ENCODE measurements at regions of chr2 and their contacts with region 1.

Region 1: DNA sequence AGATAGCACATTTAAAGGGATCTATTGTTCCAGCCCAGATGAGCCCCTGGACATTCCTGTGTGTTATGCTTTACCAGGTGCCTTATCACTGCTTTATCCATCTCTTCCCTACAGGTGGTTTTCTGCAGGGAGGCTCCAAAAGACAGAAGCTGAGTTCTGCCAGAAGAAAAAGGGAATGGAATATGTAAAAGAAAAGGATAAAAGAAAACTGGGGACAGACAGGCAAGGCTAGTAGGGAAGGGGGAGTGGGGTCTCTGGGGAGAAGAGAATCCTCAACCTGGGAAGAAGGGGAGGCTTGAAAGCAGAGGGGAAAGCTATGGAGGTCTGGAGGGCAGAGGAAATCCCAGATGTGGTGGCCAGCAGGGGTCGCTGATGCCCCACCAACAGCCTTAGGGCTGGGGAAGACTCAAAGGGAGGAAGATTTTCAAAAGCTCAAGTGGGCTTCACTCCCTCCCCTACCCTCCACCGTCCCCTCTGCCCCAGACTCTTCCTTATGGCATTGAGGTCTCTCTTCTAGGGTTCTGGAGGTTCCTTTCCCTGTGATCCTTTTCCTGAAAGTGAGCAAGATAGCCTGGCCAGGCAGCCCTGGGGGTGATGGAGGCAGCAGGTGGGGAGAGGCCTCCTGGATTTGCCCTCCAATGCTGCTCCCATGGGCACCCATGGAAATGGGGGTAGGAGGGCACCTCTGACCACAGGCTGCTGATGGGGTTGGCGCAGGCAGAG is 178.1 kb upstream of the PKDCC start:
- DNase-seq: peak; percentile 55
- ATAC-seq: peak; percentile 77
- H3K4me3 ChIP-seq: no peak overlapping the region
- H3K27ac ChIP-seq: no peak overlapping the region
- H3K4me1 ChIP-seq: peaks cover 22% of the 10 kb centered on the region
- H3K27me3 ChIP-seq: no peaks in the 10 kb centered on the region
- CTCF ChIP-seq: peak; percentile 94
- POLR2A ChIP-seq: 0 out of 2 replicates have a peak, but pooled peaks have one; percentile 28
- RAD21 ChIP-seq: peak; percentile 98

Region 2: DNA sequence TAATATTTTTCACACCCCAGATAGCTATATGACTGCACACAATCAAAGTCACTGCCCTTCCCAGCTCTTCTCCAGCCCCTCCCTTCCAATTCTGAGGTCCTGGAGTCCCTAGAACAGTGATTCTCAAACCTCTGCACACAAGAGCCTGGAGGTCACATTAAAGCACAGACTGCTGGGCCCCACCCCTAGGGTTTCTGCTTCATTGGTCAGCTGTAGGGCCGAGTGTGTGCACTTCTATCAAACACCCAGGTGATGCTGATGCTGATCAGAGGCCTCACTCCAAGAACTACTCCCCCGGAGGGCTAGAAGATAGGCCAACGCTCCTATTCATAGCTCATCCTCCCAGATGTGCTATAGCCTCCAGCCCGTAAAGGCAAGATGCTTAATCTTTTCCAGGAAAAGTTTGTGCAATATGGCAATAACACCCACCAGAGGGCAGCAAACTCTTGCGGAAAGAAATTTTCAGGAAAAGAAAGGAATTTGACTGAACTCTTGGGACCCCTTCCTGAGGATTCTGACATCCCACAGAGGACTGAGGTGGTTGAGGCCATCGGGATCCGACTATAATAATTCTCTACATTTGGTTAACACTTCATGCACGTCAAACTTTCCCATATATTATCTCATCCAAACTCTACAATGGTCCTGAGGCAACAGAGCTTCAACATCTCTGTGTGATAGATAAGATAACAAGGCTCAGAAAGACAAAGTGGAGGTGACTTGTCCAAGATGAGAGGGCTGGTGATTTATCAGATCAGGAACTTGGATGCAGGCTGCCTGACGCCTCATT is 16.1 kb before region 1 on chr2:
- CTCF ChIA-PET with region 1: interaction called, 41 read pairs
- POLR2A ChIA-PET with region 1: no interaction called
- dilution Hi-C with region 1: no loop called
- in situ Hi-C with region 1: no loop called
- intact Hi-C with region 1: loop called (anchors 1 kb)
- DNase-seq: peak; percentile 65
- ATAC-seq: peak; percentile 73
- H3K4me3 ChIP-seq: no peak overlapping the region
- H3K27ac ChIP-seq: no peak overlapping the region
- H3K4me1 ChIP-seq: peaks cover 2% of the 10 kb centered on the region; the same call in 1 of the 2 replicates
- H3K27me3 ChIP-seq: peaks cover 16% of the 10 kb centered on the region
- CTCF ChIP-seq: peak; percentile 79
- POLR2A ChIP-seq: no peak
- RAD21 ChIP-seq: peak; percentile 84

Region 3: GRCh38 chr2:41966431-41966893 is 96.8 kb after region 1 on chr2:
- CTCF ChIA-PET with region 1: no interaction called
- POLR2A ChIA-PET with region 1: no interaction called
- dilution Hi-C with region 1: no loop called
- in situ Hi-C with region 1: no loop called
- intact Hi-C with region 1: loop called (anchors 5 kb)
- DNase-seq: peak; percentile 96
- ATAC-seq: peak; percentile 93
- H3K4me3 ChIP-seq: no peak overlapping the region
- H3K27ac ChIP-seq: peak overlapping the region; percentile 5; the same call in 1 of the 2 replicates
- H3K4me1 ChIP-seq: peaks cover 27% of the 10 kb centered on the region
- H3K27me3 ChIP-seq: peaks cover 27% of the 10 kb centered on the region
- CTCF ChIP-seq: no peak
- POLR2A ChIP-seq: no peak
- RAD21 ChIP-seq: peak; percentile 44

Region 4: GRCh38 chr2:42086500-42086953 is 216.8 kb after region 1 on chr2:
- CTCF ChIA-PET with region 1: interaction called, 119 read pairs
- POLR2A ChIA-PET with region 1: no interaction called
- dilution Hi-C with region 1: no loop called
- in situ Hi-C with region 1: loop called (anchors 5 kb)
- intact Hi-C with region 1: loop called (anchors 1 kb)
- DNase-seq: peak; percentile 70
- ATAC-seq: peak; percentile 59
- H3K4me3 ChIP-seq: no peak overlapping the region
- H3K27ac ChIP-seq: no peak overlapping the region
- H3K4me1 ChIP-seq: peaks cover 14% of the 10 kb centered on the region
- H3K27me3 ChIP-seq: no peaks in the 10 kb centered on the region
- CTCF ChIP-seq: peak; percentile 88
- POLR2A ChIP-seq: no peak
- RAD21 ChIP-seq: peak; percentile 95

Region 5: GRCh38 chr2:42663106-42663780 is 793.5 kb after region 1 on chr2:
- CTCF ChIA-PET with region 1: interaction called, 3 read pairs
- POLR2A ChIA-PET with region 1: no interaction called
- dilution Hi-C with region 1: no loop called
- in situ Hi-C with region 1: loop called (anchors 25 kb)
- intact Hi-C with region 1: no loop called
- DNase-seq: peak; percentile 77
- ATAC-seq: peak; percentile 98
- H3K4me3 ChIP-seq: no peak overlapping the region
- H3K27ac ChIP-seq: no peak overlapping the region
- H3K4me1 ChIP-seq: no peaks in the 10 kb centered on the region
- H3K27me3 ChIP-seq: no peaks in the 10 kb centered on the region
- CTCF ChIP-seq: peak; percentile 97
- POLR2A ChIP-seq: no peak
- RAD21 ChIP-seq: peak; percentile 96

Measured in IMR-90 (cell line).